ENCODE measurements at regions of chrX and their contacts with region 1.

Region 1: GRCh38 chrX:45322382-45322781 is 121.7 kb upstream of the DIPK2B start:
- DNase-seq: peak; percentile 83
- ATAC-seq: peak; percentile 87
- H3K4me3 ChIP-seq: no peak overlapping the region
- H3K27ac ChIP-seq: peak overlapping the region; percentile 66
- H3K4me1 ChIP-seq: no peaks in the 10 kb centered on the region
- H3K27me3 ChIP-seq: peaks cover 4% of the 10 kb centered on the region
- CTCF ChIP-seq: peak; percentile 69
- POLR2A ChIP-seq: no peak
- RAD21 ChIP-seq: peak; percentile 81

Region 2: DNA sequence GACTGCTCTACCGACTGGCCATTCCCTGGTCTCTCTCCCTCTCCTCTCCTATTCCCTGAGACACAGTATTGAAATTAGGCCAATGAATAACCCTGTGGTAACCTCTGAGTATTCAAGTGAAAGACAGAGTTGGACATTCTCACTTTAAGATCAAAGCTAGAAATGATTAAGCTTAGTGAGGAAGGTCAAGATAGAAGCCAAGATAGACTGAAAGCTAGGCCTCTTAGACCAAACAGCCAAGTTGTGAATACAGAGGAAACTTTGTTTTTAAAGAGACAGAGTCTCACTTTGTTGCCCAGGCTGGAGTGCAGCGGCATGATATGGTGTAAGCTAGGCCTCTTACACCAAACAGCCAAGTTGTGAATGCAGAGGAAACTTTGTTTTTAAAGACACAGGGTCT is 384.8 kb before region 1 on chrX:
- CTCF ChIA-PET with region 1: no interaction called
- POLR2A ChIA-PET with region 1: no interaction called
- dilution Hi-C with region 1: no loop called
- in situ Hi-C with region 1: no loop called
- intact Hi-C with region 1: no loop called
- DNase-seq: no peak
- ATAC-seq: no peak
- H3K4me3 ChIP-seq: no peak overlapping the region
- H3K27ac ChIP-seq: no peak overlapping the region
- H3K4me1 ChIP-seq: no peaks in the 10 kb centered on the region
- H3K27me3 ChIP-seq: no peaks in the 10 kb centered on the region
- CTCF ChIP-seq: no peak
- POLR2A ChIP-seq: no peak
- RAD21 ChIP-seq: no peak

Region 3: GRCh38 chrX:45126158-45126557 is 196.2 kb before region 1 on chrX:
- CTCF ChIA-PET with region 1: no interaction called
- POLR2A ChIA-PET with region 1: no interaction called
- dilution Hi-C with region 1: no loop called
- in situ Hi-C with region 1: no loop called
- intact Hi-C with region 1: no loop called
- DNase-seq: no peak
- ATAC-seq: no peak
- H3K4me3 ChIP-seq: no peak overlapping the region
- H3K27ac ChIP-seq: no peak overlapping the region
- H3K4me1 ChIP-seq: no peaks in the 10 kb centered on the region
- H3K27me3 ChIP-seq: peaks cover 3% of the 10 kb centered on the region
- CTCF ChIP-seq: no peak
- POLR2A ChIP-seq: no peak
- RAD21 ChIP-seq: no peak

Region 4: GRCh38 chrX:45479835-45480422 is 157.5 kb after region 1 on chrX:
- CTCF ChIA-PET with region 1: no interaction called
- POLR2A ChIA-PET with region 1: no interaction called
- dilution Hi-C with region 1: no loop called
- in situ Hi-C with region 1: no loop called
- intact Hi-C with region 1: loop called (anchors 1 kb)
- DNase-seq: peak; percentile 91
- ATAC-seq: peak; percentile 78
- H3K4me3 ChIP-seq: no peak overlapping the region
- H3K27ac ChIP-seq: peak overlapping the region; percentile 89
- H3K4me1 ChIP-seq: peaks cover 4% of the 10 kb centered on the region; the same call in 1 of the 2 replicates
- H3K27me3 ChIP-seq: no peaks in the 10 kb centered on the region; the same call in 1 of the 2 replicates
- CTCF ChIP-seq: no peak
- POLR2A ChIP-seq: no peak
- RAD21 ChIP-seq: no peak

Region 5: DNA sequence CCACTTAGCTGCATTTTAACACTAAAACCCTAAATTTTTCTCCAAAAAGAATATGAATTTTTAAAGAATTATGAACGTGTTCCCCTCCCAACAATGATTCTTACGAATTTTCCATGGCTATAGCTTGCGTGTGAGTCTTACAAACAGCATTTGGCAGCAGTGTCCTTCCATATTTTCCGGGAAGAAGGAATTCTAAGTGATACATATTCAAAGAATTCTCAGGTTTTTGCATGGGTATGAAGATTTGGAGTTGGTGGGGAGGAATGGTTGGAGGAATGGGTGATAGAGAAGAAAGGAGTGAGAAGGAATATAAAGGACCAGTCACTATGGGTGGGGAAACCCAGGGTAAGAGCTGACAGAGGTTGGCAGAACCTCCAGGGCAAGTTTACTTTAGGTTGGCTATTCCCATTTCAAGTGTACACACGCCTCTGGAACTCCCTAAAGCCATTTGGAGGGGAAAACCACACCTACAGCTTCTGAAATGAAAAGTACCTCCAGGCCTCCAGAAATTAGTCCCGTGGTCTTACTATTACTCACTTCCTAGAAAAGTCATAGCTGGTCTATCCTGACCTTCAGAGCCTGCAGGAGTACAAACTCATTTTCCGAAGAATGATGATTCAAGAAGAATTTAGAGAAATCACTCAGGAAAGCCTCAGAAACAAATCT is 299.1 kb after region 1 on chrX:
- CTCF ChIA-PET with region 1: no interaction called
- POLR2A ChIA-PET with region 1: no interaction called
- dilution Hi-C with region 1: no loop called
- in situ Hi-C with region 1: no loop called
- intact Hi-C with region 1: loop called (anchors 5 kb)
- DNase-seq: peak; percentile 80
- ATAC-seq: peak; percentile 16; the same call in 1 of the 2 replicates
- H3K4me3 ChIP-seq: no peak overlapping the region
- H3K27ac ChIP-seq: peak overlapping the region; percentile 78
- H3K4me1 ChIP-seq: peaks cover 2% of the 10 kb centered on the region; the same call in 1 of the 2 replicates
- H3K27me3 ChIP-seq: no peaks in the 10 kb centered on the region
- CTCF ChIP-seq: no peak
- POLR2A ChIP-seq: no peak
- RAD21 ChIP-seq: no peak

Region 6: DNA sequence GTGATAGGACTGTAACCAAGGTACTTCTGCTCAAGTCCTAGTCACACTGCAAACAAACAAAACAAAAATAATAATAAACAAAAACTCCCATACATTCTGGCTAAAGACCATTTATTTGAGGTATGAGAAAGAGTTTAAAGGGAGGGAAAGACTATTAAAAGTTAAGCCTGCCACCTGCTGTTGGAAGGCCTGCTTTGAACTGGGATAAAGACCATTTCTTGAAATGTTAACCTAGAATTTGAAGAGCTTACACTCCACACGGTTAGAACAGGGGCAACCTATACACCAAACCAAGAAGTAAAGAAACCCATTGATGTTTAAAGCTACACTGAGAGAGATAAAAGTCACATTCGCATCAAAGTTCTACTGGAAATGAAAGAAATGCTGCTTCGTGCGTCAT is 427.0 kb after region 1 on chrX:
- CTCF ChIA-PET with region 1: no interaction called
- POLR2A ChIA-PET with region 1: no interaction called
- dilution Hi-C with region 1: no loop called
- in situ Hi-C with region 1: no loop called
- intact Hi-C with region 1: loop called (anchors 1 kb)
- DNase-seq: no peak
- ATAC-seq: no peak
- H3K4me3 ChIP-seq: no peak overlapping the region
- H3K27ac ChIP-seq: no peak overlapping the region
- H3K4me1 ChIP-seq: peaks cover 8% of the 10 kb centered on the region
- H3K27me3 ChIP-seq: no peaks in the 10 kb centered on the region
- CTCF ChIP-seq: peak; percentile 44
- POLR2A ChIP-seq: no peak
- RAD21 ChIP-seq: peak; percentile 51

Region 7: DNA sequence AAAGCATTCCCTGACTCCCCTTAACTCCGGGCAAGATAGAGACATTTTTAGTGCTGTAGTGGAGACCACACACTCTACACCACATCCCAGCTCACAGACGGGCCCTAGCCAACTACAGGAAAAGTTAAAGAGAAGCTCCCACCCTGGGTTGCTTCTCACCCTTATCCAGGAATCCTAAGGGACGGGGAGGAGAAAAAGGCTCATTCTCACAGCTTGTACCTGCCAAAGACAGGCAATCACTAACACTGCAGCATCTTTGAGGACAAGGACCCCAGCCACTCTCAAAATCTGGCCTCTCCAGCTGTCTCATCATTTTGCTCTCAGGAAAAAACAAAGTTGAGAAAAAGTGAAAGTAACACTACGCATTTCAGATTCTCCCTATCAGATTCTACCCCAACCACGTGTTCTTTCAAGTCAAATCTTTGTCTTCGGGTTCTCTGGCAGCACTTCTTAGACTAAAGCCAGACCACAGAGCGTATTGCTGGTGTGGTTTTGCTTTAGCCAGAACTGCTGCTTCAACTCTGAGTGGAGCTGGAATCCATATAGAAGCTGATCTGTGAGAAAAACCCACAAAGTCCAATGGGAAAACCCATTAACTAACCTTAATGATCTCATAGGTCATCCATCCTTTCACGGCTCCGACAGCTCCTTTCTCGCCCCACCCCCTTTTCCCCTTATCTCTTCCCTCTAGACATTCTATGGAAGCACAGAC is 484.2 kb after region 1 on chrX:
- CTCF ChIA-PET with region 1: no interaction called
- POLR2A ChIA-PET with region 1: no interaction called
- dilution Hi-C with region 1: no loop called
- in situ Hi-C with region 1: no loop called
- intact Hi-C with region 1: loop called (anchors 5 kb)
- DNase-seq: peak; percentile 92
- ATAC-seq: peak; percentile 28
- H3K4me3 ChIP-seq: peak overlapping the region; percentile 30
- H3K27ac ChIP-seq: peak overlapping the region; percentile 86
- H3K4me1 ChIP-seq: peaks cover 20% of the 10 kb centered on the region
- H3K27me3 ChIP-seq: no peaks in the 10 kb centered on the region
- CTCF ChIP-seq: no peak
- POLR2A ChIP-seq: peak; percentile 64; the same call in 1 of the 2 replicates
- RAD21 ChIP-seq: no peak